HepG2 (cell line): ENCODE measurements at regions of chr1 and their contacts with region 1.

Region 1: GRCh38 chr1:229558571-229559335 is at the start of gene ABCB10:
- DNase-seq: peak; percentile 95
- ATAC-seq: peak; percentile 87
- H3K4me3 ChIP-seq: peak within 1 kb of the TSS; percentile 78 to 90 (median 81)
- H3K27ac ChIP-seq: peak within 1 kb of the TSS; percentile 88
- H3K4me1 ChIP-seq: peaks cover 43% of the 10 kb centered on the region
- H3K27me3 ChIP-seq: no peaks in the 10 kb centered on the region; a peak in 1 of 5 replicates
- CTCF ChIP-seq: peak; percentile 94
- EP300 ChIP-seq: 0 out of 4 replicates have a peak, but pooled peaks of 1 of the 2 experiments have one; percentile 13
- POLR2A ChIP-seq: peak in 1 of 2 experiments; percentile 78; a peak in 2 of 4 replicates
- RAD21 ChIP-seq: peak; percentile 63; the same call in 1 of the 2 replicates
- total RNA-seq, gene ABCB10: 20.1 and 28.9 TPM in 2 replicates

Region 2: GRCh38 chr1:229507951-229508822 is 50.6 kb before region 1 on chr1 and contains the start of gene NUP133:
- CTCF ChIA-PET with region 1: no interaction called
- POLR2A ChIA-PET with region 1: interaction called, 19 read pairs
- in situ Hi-C with region 1: no loop called
- intact Hi-C with region 1: loop called (anchors 5 kb)
- DNase-seq: peak; percentile 95
- ATAC-seq: peak; percentile 91
- H3K4me3 ChIP-seq: peak within 1 kb of the TSS; percentile 89 to 91 (median 90)
- H3K27ac ChIP-seq: peak within 1 kb of the TSS; percentile 97
- H3K4me1 ChIP-seq: peaks cover 27% of the 10 kb centered on the region
- H3K27me3 ChIP-seq: no peaks in the 10 kb centered on the region; a peak in 1 of 5 replicates
- CTCF ChIP-seq: no peak; the same call in 1 of the 2 replicates
- EP300 ChIP-seq: peak; percentile 32 to 64; a peak in 2 of 4 replicates
- POLR2A ChIP-seq: peak; percentile 93 to 96
- RAD21 ChIP-seq: no peak
- total RNA-seq, gene NUP133: 45.6 and 78.5 TPM in 2 replicates

Region 3: DNA sequence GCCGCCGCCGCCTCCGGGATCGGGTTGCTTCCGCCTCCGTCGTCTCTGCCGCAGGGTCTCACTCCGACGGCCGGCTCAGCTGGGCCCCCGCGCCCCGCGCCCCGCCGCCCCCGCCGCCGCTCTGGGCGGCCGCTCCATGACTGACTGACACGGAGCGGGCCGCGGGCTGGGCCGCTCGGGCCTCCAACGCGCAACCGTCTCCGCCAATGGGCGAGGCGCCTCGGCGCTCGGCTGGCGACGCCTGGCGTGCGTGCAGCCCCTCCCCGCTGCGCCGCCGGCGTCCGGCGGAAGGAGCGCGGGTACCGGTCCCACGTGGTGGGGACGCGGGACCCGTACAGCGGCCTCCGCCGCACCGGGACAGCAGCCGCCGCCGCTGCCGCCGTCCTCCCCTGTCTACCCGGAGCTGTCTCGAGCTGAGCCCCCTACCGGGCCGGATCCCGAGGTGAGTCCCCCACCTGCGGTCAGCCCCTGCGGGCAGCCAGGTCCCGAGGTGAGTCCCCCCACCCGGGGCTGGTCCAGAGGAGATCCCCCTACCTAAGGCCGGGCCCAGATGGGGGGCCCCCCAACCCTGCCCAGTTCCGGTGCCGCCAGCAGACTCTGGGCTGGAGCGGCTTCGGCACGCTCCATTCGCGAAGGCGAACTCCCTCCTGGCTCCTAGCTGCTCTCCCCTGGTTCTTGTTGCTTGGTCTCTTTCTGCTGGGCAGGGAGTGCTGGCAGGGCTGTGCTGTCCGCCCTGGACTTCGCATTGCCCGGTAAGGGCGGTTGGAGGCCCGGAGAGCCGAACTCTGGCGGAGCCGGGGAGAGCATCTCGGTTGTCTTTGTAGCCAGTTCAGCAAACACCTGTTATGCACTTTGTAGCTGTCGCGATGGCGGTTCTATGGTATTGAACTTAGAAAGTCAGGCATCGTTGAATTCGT is 67.4 kb after region 1 on chr1 and contains the starts of genes TAF5L and URB2:
- CTCF ChIA-PET with region 1: no interaction called
- POLR2A ChIA-PET with region 1: interaction called, 34 read pairs
- in situ Hi-C with region 1: loop called (anchors 5 kb)
- intact Hi-C with region 1: loop called (anchors 1 kb)
- DNase-seq: peak; percentile 75
- ATAC-seq: peak; percentile 93
- H3K4me3 ChIP-seq: peak within 1 kb of the TSS; percentile 86 to 96 (median 92)
- H3K27ac ChIP-seq: peak within 1 kb of the TSS; percentile 69
- H3K4me1 ChIP-seq: peaks cover 31% of the 10 kb centered on the region
- H3K27me3 ChIP-seq: no peaks in the 10 kb centered on the region; a peak in 1 of 5 replicates
- CTCF ChIP-seq: 0 out of 2 replicates have a peak, but pooled peaks have one; percentile 2
- EP300 ChIP-seq: 0 out of 4 replicates have a peak, but pooled peaks of 1 of the 2 experiments have one; percentile 7
- POLR2A ChIP-seq: peak; percentile 59 to 72; a peak in 3 of 4 replicates
- RAD21 ChIP-seq: no peak; the same call in 1 of the 2 replicates
- total RNA-seq, gene TAF5L: 16.8 and 18.2 TPM in 2 replicates
- total RNA-seq, gene URB2: 17.6 and 17.9 TPM in 2 replicates

Region 4: DNA sequence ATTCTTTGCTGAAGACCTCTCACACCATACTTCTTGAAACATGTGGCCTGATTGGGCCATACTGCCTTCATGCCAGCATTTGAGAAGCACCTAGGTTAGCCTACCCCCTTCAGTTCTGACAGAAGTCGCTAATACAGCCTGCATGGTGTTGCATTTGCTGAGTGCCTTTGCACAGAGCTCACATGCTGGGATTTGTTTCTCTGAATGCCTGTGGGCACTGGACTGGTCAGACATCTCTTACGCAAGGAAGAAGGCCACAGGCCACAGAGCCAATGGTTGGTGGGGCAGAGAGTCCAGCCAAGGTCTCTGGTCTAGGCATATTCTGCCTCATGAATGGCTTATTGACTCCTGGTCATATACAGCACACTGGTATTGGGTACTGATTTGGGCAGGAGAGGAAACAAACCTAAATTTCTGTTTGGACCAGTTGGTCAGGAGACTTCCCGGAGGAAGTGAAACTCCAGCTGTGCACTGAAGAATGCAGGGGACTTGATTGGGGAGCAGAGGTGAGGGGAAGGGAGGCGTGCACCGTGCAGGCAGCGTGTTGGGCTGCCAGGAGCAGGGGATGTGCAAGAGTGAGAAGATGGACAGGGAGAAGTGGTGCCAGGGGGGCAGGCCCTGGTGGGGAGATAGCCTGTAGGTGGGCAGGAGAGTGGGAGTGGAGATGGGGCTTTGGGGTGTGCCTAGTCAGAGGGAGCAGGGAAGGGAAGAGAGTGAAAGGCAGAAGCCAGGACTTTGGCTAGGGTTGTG is 85.4 kb after region 1 on chr1:
- CTCF ChIA-PET with region 1: no interaction called
- POLR2A ChIA-PET with region 1: no interaction called
- in situ Hi-C with region 1: no loop called
- intact Hi-C with region 1: no loop called
- DNase-seq: no peak
- ATAC-seq: peak; percentile 39; the same call in 1 of the 3 replicates
- H3K4me3 ChIP-seq: no peak overlapping the region
- H3K27ac ChIP-seq: no peak overlapping the region
- H3K4me1 ChIP-seq: no peaks in the 10 kb centered on the region
- H3K27me3 ChIP-seq: no peaks in the 10 kb centered on the region
- CTCF ChIP-seq: no peak
- EP300 ChIP-seq: no peak
- POLR2A ChIP-seq: no peak
- RAD21 ChIP-seq: no peak